Right ventricle myocardium superior (tissue), 1 donor: ENCODE measurements at regions of chr1 and their contacts with region 1.

Region 1: DNA sequence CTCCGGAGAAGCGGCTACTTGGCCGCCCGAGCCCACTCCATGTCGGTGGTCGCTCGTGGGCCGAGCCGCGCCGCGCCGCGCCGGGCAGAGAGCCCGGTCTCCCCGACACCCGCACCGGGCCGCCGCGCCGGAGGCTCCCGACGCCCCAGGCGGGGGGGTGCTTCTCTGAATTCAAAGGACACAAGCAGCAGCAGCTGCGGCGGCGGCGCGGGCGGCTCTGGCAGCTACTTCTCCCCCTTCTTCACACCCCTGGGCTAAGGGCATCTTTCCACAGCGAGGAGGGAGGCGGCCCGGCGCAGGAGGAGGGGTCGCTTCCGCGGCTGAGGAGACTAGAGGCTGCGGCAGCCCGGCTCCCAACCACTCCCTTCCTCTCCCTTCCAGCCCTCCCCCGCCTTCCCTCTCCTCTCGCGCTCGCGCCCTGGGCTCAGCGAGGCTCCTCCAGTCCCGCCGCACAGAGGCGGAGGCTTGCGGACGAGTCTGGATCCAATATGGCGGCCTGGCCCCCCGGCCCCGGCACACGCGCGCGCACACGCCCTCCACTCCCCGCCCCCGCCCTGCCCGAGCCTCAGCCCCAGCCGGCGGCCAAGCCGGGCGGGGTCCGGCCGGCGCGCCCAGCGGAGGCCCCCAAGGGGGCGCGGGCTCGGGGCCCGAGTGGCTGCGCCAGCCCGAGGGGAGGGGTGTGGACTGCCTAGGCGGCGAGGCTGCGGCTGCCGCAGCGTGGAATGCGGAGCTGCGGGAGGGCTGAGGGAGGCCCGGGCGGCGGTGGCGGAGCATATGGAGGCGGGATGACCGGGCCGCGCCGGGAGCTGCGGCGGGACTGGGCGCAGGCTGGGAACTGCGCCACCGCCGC is at the start of gene CDC42BPA:
- DNase-seq: peak; percentile 92
- ATAC-seq: peak; percentile 87
- total RNA-seq, gene CDC42BPA: 40.5 TPM

Region 2: DNA sequence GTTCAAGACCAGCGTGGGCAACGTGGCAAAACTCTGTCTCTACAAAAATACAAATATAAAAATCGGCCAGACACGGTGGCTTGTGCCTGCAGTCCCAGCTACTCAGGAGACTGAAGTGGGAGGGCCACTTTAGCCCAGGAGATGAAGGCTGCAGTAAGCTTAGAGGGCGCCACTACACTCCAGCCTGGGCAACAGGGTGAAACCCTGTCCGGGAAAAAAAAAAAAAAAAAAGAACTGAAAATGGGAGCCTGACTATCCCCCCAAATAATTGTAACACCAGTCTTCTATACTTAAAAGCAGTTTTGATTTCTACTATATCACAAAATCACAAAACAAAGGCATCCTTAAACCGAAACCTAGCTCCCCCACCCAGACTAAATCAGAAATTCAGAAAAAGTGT is 60.3 kb before region 1 on chr1:
- intact Hi-C with region 1: no loop called
- DNase-seq: no peak
- ATAC-seq: no peak

Region 3: DNA sequence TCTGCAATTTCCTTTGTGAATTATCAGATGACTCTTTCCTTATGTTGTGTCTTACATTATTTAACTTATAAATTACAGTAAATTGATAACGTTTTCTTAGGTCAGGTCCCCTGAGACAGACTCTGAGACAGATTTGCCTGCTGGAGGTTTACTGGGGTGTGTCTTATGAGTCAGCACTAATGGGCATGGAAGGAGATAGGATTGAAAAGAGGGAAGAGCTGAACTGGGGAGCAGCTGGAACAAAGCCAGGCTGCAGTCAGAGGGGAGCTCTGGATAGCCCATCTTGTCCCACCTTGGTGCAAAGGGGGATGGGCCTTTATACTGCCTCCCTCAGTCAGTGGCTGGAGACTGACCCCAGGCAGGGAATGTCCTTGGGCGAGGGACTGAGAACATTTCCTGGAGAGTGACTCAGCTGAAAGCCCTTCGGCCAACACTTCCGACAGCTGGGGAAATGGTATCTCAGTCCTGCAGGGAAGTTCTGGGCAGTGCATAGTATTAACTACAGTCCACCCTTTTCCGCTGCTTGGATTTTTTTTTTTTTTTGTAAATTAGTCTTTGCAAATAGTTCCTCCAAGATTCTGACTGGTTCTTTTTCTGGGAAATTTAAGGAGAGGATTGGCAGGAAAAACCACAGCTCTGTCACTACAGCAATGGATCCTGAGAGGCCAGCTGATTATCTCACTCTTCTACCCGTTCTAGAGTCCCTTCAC is 39.1 kb after region 1 on chr1:
- intact Hi-C with region 1: loop called (anchors 5 kb)
- DNase-seq: peak; percentile 71
- ATAC-seq: peak; percentile 97